Activated CD4-positive, alpha-beta T cell treated with anti-CD3 and anti-CD28 coated beads for 36 hours (primary cell): ENCODE measurements at regions of chr17 and their contacts with region 1.

Region 1: GRCh38 chr17:82418001-82418986 is at the starts of genes HEXD and OGFOD3:
- DNase-seq: peak; percentile 91
- ATAC-seq: peak; percentile 88
- H3K4me3 Mint-ChIP-seq: peak within 1 kb of the TSS; percentile 73
- H3K27ac Mint-ChIP-seq: peak within 1 kb of the TSS; percentile 42
- H3K4me1 Mint-ChIP-seq: peaks cover 21% of the 10 kb centered on the region
- H3K27me3 Mint-ChIP-seq: no peaks in the 10 kb centered on the region
- total RNA-seq, gene HEXD: 23.3 to 26.0 TPM
- total RNA-seq, gene OGFOD3: 20.0 to 22.3 TPM

Region 2: GRCh38 chr17:82205719-82206508 is 212.4 kb before region 1 on chr17:
- CTCF ChIA-PET with region 1: interaction called, 8 read pairs
- POLR2A ChIA-PET with region 1: no interaction called
- intact Hi-C with region 1: loop called in 1 of 2 experiments (anchors 1 kb)
- DNase-seq: peak; percentile 89
- ATAC-seq: peak; percentile 76
- H3K4me3 Mint-ChIP-seq: peak overlapping the region; percentile 60
- H3K27ac Mint-ChIP-seq: peak overlapping the region; percentile 93
- H3K4me1 Mint-ChIP-seq: peaks cover 52% of the 10 kb centered on the region
- H3K27me3 Mint-ChIP-seq: no peaks in the 10 kb centered on the region

Region 3: DNA sequence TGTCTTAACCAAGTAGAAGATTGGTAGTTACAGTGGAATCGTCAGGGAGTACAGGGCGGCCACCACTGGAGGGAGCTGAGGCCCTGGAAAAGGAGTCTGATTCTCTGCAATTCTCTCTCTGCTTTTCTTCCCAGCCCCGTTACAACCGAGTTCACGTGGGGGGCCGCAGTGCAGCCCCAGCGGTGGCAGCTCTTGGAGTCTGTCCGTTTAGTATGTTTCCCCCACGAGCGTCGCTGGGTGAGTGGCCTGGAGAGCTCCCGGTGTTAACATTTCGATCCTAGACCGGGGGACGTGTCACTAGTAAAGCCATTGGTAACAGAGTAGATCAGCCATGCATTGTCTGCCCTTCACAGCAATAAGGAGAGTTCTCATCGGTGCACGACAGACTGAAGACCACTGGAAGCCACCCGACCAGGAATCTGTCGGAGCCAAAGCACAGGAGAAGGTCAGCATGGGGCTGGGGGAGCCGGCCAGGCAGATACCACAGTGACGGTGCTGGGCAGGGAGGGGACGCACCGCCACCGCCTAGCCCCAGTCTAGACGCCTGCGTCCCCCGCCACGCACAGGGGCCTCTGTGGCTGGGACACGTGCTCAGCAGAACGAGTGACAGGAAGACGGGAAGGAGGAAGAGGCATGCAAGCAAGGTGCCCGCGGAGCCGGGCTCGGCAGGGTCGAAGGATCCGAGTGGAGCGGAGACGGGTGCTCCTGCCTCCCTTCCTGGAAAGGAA is 173.7 kb before region 1 on chr17:
- CTCF ChIA-PET with region 1: interaction called, 3 read pairs
- POLR2A ChIA-PET with region 1: interaction called, 3 read pairs
- intact Hi-C with region 1: loop called (anchors 1 to 10 kb)
- DNase-seq: peak; percentile 72
- ATAC-seq: no peak
- H3K4me3 Mint-ChIP-seq: peak overlapping the region; percentile 15
- H3K27ac Mint-ChIP-seq: peak overlapping the region; percentile 75
- H3K4me1 Mint-ChIP-seq: peaks cover 50% of the 10 kb centered on the region
- H3K27me3 Mint-ChIP-seq: no peaks in the 10 kb centered on the region

Region 4: DNA sequence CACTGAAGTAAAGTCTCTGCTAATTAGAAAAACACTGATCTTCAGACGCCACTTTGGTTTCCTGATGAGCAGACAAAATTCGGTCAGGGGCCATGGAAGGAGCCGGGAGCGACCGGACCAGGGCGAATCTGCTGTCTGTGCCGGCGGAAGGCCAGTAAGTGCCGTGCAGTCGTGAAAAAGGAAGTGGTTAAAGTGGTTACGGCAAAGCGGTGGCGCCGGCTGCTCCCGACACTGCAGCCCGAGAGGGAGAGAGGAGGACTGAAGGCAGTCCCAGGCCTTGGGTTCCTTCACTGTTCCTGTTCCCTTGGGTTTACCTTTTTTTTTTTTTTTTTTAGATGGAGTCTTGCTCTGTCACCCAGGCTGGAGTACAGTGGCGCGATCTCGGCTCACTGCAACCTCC is 17.5 kb before region 1 on chr17:
- CTCF ChIA-PET with region 1: no interaction called
- POLR2A ChIA-PET with region 1: no interaction called
- intact Hi-C with region 1: no loop called
- DNase-seq: peak; percentile 77
- ATAC-seq: peak; percentile 89
- H3K4me3 Mint-ChIP-seq: peak overlapping the region; percentile 62
- H3K27ac Mint-ChIP-seq: peak overlapping the region; percentile 73
- H3K4me1 Mint-ChIP-seq: peaks cover 16% of the 10 kb centered on the region
- H3K27me3 Mint-ChIP-seq: no peaks in the 10 kb centered on the region

Region 5: GRCh38 chr17:82450170-82451106 is 32.1 kb after region 1 on chr17 and contains the start of gene CYBC1:
- CTCF ChIA-PET with region 1: interaction called, 3 read pairs
- POLR2A ChIA-PET with region 1: no interaction called
- intact Hi-C with region 1: loop called (anchors 1 to 2 kb)
- DNase-seq: peak; percentile 98
- ATAC-seq: peak; percentile 69
- H3K4me3 Mint-ChIP-seq: peak within 1 kb of the TSS; percentile 87
- H3K27ac Mint-ChIP-seq: peak within 1 kb of the TSS; percentile 97
- H3K4me1 Mint-ChIP-seq: peaks cover 46% of the 10 kb centered on the region
- H3K27me3 Mint-ChIP-seq: no peaks in the 10 kb centered on the region
- total RNA-seq, gene CYBC1: 286 to 329 TPM

Region 6: GRCh38 chr17:82518826-82519810 is 100.8 kb after region 1 on chr17 and contains the start of gene FOXK2:
- CTCF ChIA-PET with region 1: no interaction called
- POLR2A ChIA-PET with region 1: no interaction called
- intact Hi-C with region 1: loop called in 1 of 2 experiments (anchors 1 kb)
- DNase-seq: peak; percentile 95
- ATAC-seq: peak; percentile 98
- H3K4me3 Mint-ChIP-seq: peak within 1 kb of the TSS; percentile 88
- H3K27ac Mint-ChIP-seq: peak within 1 kb of the TSS; percentile 92
- H3K4me1 Mint-ChIP-seq: peaks cover 24% of the 10 kb centered on the region
- H3K27me3 Mint-ChIP-seq: no peaks in the 10 kb centered on the region
- total RNA-seq, gene FOXK2: 58.1 to 75.4 TPM

Region 7: DNA sequence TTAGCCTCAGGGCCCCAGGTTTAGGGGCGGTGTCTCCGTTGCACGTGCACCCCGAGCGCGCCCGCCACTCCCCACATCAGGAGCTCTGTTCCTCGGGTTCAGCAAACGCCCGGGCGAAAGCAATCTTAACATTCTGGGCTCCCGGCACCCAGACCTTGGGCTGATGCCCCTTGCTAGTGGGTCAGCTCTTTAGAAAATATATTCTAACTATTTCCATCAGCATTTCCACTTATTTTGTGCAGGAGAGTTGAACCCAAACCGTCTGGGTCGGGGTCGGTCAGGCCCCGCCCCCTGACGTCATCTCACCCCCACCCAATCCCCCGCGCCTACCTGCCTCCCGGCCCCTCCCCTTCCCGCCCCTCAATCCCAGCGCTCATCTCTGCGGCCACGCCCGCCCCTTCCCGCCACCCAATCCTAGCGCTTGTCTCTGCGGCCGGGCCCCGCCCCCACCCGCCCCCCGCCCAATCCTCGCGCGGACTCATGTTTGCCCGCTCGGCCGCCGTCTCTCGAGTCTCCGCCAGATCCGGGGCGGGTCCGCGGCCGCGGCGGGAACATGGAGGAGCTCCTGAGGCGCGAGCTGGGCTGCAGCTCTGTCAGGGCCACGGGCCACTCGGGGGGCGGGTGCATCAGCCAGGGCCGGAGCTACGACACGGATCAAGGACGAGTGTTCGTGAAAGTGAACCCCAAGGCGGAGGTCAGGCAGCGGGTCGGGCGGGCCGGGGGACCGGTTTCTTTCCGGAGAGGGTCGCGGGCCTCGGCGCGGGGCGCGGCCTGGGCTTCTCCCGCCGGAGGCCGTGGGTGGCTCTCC is 298.1 kb after region 1 on chr17 and contains the start of gene FN3KRP:
- CTCF ChIA-PET with region 1: no interaction called
- POLR2A ChIA-PET with region 1: no interaction called
- intact Hi-C with region 1: loop called in 1 of 2 experiments (anchors 1 kb)
- DNase-seq: peak; percentile 95
- ATAC-seq: peak; percentile 91
- H3K4me3 Mint-ChIP-seq: peak within 1 kb of the TSS; percentile 93
- H3K27ac Mint-ChIP-seq: peak within 1 kb of the TSS; percentile 88
- H3K4me1 Mint-ChIP-seq: peaks cover 10% of the 10 kb centered on the region
- H3K27me3 Mint-ChIP-seq: no peaks in the 10 kb centered on the region
- total RNA-seq, gene FN3KRP: 28.3 to 36.3 TPM